H1 (cell line): ENCODE measurements at regions of chr3 and their contacts with region 1.

Region 1: DNA sequence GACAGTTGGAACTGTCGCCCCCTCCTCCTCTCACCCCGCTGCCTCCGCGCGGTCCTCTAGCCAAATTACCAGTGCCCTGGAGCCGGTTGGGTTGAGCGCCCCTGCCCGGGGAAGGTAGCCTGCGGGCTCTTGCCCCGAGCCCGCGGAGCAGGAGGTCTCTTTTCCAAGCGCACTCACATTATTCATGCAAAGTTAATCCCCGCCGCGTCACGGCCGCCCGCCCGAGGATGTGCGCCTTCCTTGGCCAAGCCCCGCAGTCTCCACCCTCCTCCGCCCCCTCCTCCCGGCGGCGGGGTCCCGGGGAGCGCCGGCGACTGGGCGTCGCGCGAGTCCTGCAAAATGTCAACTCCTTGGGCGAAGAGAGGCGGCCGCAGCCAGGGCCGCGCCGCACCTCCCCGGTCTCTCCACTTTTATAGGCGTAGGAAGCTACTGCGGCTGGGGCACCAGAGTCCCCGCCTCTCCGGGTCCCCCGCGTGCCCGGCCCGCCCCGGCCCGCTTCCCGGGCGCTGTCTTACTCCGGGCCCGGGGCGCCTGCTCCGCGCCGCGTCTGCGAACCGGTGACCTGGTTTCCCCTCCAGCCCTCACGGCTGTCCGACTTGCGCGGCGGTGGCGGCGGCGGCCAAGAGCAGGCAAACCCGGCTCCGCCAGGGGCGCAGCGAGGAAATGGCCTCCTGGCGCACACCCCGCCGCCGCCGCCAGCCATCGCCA is at the start of gene THRB:
- DNase-seq: peak in 1 of 2 experiments; percentile 82
- H3K4me3 ChIP-seq: peak within 1 kb of the TSS; percentile 56 to 73 (median 69)
- H3K27ac ChIP-seq: no peak within 1 kb of the TSS
- H3K4me1 ChIP-seq: peaks cover 0 to 25% (median 11%) of the 10 kb centered on the region in 4 experiments; a peak in 6 of 7 replicates
- H3K27me3 ChIP-seq: peaks cover 0 to 15% (median 8%) of the 10 kb centered on the region in 4 experiments; a peak in 4 of 7 replicates
- CTCF ChIP-seq: peak in 2 of 3 experiments; percentile 8 to 25; a peak in 2 of 4 replicates
- EP300 ChIP-seq: no peak
- POLR2A ChIP-seq: no peak
- RAD21 ChIP-seq: peak in 1 of 2 experiments; percentile 7; a peak in 1 of 4 replicates
- total RNA-seq, gene THRB: 3.7 and 3.9 TPM in 2 replicates

Region 2: DNA sequence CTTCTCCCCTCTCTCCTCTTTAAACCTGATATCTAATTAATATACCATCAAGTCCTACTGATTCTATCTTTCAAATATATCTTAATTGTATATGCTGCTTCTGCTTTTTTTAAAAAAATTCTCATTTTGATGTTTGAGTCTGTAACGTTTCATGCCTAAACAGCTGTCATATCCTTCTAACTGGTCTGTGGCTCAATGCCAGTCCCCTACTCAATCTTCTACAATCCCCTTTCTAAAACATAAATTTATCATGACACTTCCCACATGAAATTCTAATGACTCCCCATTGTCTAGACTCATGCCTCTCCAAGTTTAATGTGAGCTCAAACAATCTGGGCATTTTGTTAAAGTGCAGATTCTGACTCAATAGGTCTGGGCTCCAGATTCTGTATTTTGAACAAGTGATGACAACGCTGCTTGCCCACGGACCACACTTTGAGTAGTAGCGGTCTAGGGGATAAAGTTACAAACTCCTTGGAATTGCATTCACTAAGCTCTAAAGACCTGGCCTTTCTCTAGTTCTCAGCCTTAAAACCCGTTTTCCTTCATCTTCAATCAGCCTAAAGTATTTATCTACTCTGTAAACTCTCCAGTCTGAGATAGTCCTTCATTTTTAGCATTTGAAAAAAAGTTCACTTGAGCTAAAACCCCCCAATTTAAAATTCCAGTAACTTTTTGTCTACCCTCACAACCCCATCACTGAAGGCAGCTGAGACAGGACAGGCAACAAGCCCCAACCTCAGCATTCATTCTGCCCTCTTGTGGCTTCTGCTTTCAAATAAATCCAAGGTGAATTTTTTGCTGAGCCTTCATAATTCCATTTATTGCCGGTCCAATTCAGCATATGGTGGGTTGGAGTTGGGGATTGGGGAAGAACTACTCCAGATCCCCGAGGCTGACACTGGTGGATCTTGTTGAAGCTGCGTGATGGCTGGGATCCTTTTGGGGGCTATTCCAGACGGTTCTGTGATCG is 87.9 kb after region 1 on chr3:
- CTCF ChIA-PET with region 1: interaction called, 14 read pairs
- POLR2A ChIA-PET with region 1: interaction called, 3 read pairs
- DNase-seq: no peak
- H3K4me3 ChIP-seq: no peak overlapping the region
- H3K27ac ChIP-seq: no peak overlapping the region
- H3K4me1 ChIP-seq: peaks cover 0 to 5% (median 3%) of the 10 kb centered on the region in 4 experiments; a peak in 3 of 7 replicates
- H3K27me3 ChIP-seq: no peaks in the 10 kb centered on the region
- CTCF ChIP-seq: peak in 2 of 3 experiments; percentile 42 to 46; a peak in 2 of 4 replicates
- EP300 ChIP-seq: no peak
- POLR2A ChIP-seq: no peak
- RAD21 ChIP-seq: peak; percentile 60 to 73